Prostate gland (tissue), 2 donors: ENCODE measurements at regions of chr4 and their contacts with region 1.

Region 1: DNA sequence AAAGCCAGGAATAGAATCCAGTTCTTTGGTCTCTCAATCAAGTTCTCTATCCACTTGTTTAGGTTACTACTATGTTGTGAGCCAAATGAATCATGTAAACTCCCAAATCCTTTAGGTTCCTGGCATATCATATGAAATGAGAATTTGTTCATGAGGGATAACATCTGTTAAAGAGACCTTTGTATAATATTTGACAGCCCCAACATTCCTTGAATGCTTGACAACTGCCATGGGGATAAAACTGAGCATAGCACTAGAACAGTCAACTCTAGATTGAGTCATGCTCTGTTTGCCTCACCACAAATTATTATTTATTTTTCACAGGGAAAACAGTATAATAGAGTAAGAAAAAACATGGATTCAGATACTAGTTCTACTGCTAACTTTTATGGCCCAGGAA is 93.3 kb downstream of the NAA11 start:
- DNase-seq: no peak
- H3K4me3 ChIP-seq: no peak overlapping the region
- H3K27ac ChIP-seq: no peak overlapping the region
- H3K4me1 ChIP-seq: no peaks in the 10 kb centered on the region
- H3K27me3 ChIP-seq: no peaks in the 10 kb centered on the region
- CTCF ChIP-seq: no peak
- POLR2A ChIP-seq: no peak

Region 2: DNA sequence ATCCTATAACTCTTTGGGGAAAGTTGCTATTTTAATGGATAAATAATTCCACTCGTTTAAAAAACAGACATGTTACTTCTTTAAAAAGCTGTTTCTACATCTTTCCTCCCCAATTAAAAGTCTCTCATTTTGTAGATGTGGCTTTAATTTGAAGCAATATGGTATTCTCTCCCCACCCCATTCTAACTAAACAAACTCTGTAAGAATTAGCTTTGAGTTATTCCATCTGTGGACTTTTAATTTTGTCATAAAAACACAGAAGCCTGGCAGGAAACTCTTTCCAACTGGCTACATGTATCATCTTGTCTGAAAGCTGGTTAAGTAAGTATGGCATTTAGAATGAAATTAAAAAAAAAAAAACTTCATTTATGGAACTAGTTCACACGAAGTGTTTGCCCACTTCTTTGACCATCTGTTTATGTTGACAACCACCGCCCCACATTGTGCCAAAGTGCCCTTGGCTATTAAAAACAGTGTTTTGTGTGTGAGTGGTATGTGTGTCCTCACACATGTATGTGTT is 47.0 kb before region 1 on chr4:
- intact Hi-C with region 1: loop called (anchors 10 kb)
- DNase-seq: no peak
- H3K4me3 ChIP-seq: no peak overlapping the region
- H3K27ac ChIP-seq: no peak overlapping the region
- H3K4me1 ChIP-seq: no peaks in the 10 kb centered on the region
- H3K27me3 ChIP-seq: no peaks in the 10 kb centered on the region
- CTCF ChIP-seq: no peak
- POLR2A ChIP-seq: no peak

Region 3: GRCh38 chr4:79502081-79502480 is 269.5 kb after region 1 on chr4:
- intact Hi-C with region 1: no loop called
- DNase-seq: no peak
- H3K4me3 ChIP-seq: no peak overlapping the region
- H3K27ac ChIP-seq: no peak overlapping the region
- H3K4me1 ChIP-seq: no peaks in the 10 kb centered on the region
- H3K27me3 ChIP-seq: no peaks in the 10 kb centered on the region
- CTCF ChIP-seq: no peak
- POLR2A ChIP-seq: no peak